ENCODE measurements at regions of chr17 and their contacts with region 1.

Region 1: DNA sequence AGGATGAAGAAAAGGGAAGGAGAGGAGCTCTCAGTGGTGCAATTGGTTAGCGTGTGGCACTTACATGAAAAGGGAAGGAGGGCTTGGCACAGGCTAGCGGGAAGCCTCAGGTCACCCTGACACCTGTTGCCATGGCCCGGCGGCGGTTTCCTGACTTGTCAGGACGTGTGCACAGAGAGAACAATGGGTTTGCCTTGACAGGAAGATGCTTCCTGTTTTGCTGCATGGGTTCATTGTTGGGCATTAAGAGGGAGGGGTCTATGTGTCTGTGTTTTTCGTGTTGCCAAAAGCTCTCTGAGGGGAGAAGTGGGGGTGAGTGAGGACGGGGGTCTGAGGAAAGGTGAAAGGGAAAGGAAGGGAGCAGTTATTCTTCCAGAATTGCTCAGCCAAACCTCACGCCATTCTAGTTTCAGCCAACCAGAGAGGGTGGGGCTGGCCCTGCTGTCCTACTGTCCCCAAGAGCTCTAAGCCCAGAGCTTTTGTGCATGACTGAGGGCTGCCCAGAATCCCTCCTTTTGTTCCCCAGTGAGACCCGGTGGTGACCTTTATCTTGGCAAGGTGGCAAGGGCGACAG is 17.1 kb upstream of the CCR7 start:
- DNase-seq: peak; percentile 82
- ATAC-seq: peak; percentile 68
- H3K4me3 Mint-ChIP-seq: peak overlapping the region; percentile 50
- H3K27ac Mint-ChIP-seq: peak overlapping the region; percentile 93
- H3K4me1 Mint-ChIP-seq: peaks cover 91% of the 10 kb centered on the region
- H3K27me3 Mint-ChIP-seq: no peaks in the 10 kb centered on the region

Region 2: GRCh38 chr17:40564883-40565768 is 17.3 kb before region 1 on chr17 and contains the start of gene CCR7:
- CTCF ChIA-PET with region 1: interaction called, 21 read pairs
- POLR2A ChIA-PET with region 1: interaction called, 42 read pairs
- intact Hi-C with region 1: loop called in 1 of 2 experiments (anchors 1 kb)
- DNase-seq: peak; percentile 92
- ATAC-seq: peak; percentile 28
- H3K4me3 Mint-ChIP-seq: peak within 1 kb of the TSS; percentile 94
- H3K27ac Mint-ChIP-seq: peak within 1 kb of the TSS; percentile 98
- H3K4me1 Mint-ChIP-seq: peaks cover 48% of the 10 kb centered on the region
- H3K27me3 Mint-ChIP-seq: no peaks in the 10 kb centered on the region
- total RNA-seq, gene CCR7: 325 to 389 TPM

Measured in activated CD4-positive, alpha-beta T cell treated with anti-CD3 and anti-CD28 coated beads for 36 hours (primary cell).